Endothelial cell of umbilical vein (primary cell): ENCODE measurements at regions of chr1 and their contacts with region 1.

Region 1: DNA sequence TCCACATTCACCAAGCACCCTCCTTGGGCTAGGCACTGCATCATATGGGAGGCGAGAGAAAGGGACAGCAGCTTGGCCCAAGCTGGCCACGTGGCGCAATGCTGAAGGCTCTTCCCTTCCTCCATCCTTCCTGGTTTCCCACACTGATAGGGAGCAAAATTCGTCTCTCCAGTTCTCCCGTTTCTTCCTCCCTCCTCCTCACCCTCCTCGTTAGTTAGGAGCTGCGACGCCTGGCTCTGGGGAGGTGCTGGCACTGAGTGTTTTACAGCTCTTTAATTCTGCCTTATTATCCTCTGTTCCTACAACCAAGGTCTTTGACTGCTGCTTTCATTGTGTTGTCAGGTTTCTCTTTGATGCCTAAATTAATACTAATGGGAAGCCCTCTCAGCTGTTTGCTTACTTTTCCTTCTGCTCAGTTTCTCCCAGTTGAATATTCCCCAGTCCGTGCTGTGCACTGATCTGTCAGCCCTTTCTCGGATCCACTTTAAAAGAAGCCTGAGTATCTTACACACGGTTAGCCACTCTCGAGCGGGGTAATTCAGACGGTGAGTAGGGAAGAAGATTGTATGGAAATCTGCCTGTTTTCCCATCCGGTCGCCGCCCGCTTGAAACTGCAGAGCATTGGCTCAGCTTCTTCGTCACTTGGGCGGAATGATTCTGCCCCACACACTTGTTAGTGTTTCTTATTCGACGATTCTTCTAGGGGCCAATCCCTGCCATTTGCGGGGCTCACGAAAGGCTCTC is 56.2 kb upstream of the SMYD2 start:
- DNase-seq: peak; percentile 31
- H3K4me3 ChIP-seq: peak overlapping the region; percentile 25 to 73 (median 48)
- H3K27ac ChIP-seq: no peak overlapping the region
- H3K4me1 ChIP-seq: peaks cover 7% of the 10 kb centered on the region
- H3K27me3 ChIP-seq: peaks cover 2 to 6% of the 10 kb centered on the region in 2 experiments
- CTCF ChIP-seq: no peak
- POLR2A ChIP-seq: no peak

Region 2: DNA sequence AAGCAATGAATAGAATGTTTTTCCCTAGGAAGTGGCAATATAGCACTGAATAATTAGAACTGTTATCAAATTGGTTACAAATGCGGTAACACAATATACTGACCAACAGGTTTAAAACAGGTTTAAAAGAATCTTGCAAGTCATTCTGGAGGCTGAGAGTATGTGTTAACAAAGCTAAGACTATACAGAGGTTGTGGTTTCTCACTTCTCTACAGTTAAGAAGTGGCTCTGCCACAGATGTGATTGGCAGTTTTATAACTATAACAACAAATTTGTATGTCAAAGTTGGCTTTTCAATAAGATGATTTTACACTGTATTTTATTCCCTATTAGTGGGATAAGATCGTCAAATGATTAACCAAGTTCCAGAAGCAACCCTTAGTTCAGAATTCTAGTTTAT is 1216.2 kb before region 1 on chr1:
- CTCF ChIA-PET with region 1: no interaction called
- POLR2A ChIA-PET with region 1: interaction called, 10 read pairs
- dilution Hi-C with region 1: no loop called
- intact Hi-C with region 1: no loop called
- DNase-seq: no peak
- H3K4me3 ChIP-seq: no peak overlapping the region
- H3K27ac ChIP-seq: no peak overlapping the region
- H3K4me1 ChIP-seq: no peaks in the 10 kb centered on the region
- H3K27me3 ChIP-seq: no peaks in the 10 kb centered on the region
- CTCF ChIP-seq: no peak
- POLR2A ChIP-seq: no peak

Region 3: GRCh38 chr1:214192825-214193643 is 31.7 kb before region 1 on chr1:
- CTCF ChIA-PET with region 1: no interaction called
- POLR2A ChIA-PET with region 1: no interaction called
- dilution Hi-C with region 1: no loop called
- intact Hi-C with region 1: no loop called
- DNase-seq: no peak
- H3K4me3 ChIP-seq: no peak overlapping the region
- H3K27ac ChIP-seq: no peak overlapping the region
- H3K4me1 ChIP-seq: no peaks in the 10 kb centered on the region
- H3K27me3 ChIP-seq: peaks cover 14 to 26% of the 10 kb centered on the region in 2 experiments
- CTCF ChIP-seq: no peak
- POLR2A ChIP-seq: no peak